GM13976 (cell line): ENCODE measurements at regions of chr14 and their contacts with region 1.

Region 1: GRCh38 chr14:80850197-80850814 is 91.2 kb downstream of the CEP128 start:
- DNase-seq: no peak
- CTCF ChIP-seq: peak; percentile 40

Region 2: GRCh38 chr14:78959674-78960264 is 1890.5 kb before region 1 on chr14:
- in situ Hi-C with region 1: loop called (anchors 25 kb)
- DNase-seq: peak; percentile 54
- CTCF ChIP-seq: peak; percentile 77

Region 3: GRCh38 chr14:80213599-80213998 is 636.7 kb before region 1 on chr14:
- in situ Hi-C with region 1: loop called (anchors 25 kb)
- DNase-seq: peak; percentile 24
- CTCF ChIP-seq: peak; percentile 36

Region 4: DNA sequence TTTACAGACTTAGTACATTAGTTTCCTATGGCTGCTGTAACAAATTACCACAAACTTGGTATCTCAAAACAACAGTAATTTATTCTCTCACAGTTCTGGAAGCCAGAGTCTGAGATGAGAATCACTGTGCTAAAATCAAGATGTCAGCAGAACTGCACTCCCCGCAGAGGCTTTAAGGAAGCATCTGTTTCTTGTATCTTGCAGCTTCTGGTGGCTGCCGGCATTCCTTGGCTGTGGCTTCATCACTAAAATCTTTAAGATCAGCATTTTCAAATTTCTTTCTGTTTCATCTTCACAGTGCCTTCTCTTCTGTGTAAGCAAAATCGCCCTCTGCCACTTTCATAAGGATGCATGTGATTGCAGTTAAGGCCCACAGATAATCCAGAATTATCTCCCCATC is 540.4 kb after region 1 on chr14:
- in situ Hi-C with region 1: no loop called
- DNase-seq: no peak
- CTCF ChIP-seq: no peak